ENCODE measurements at regions of chr5 and their contacts with region 1.

Region 1: DNA sequence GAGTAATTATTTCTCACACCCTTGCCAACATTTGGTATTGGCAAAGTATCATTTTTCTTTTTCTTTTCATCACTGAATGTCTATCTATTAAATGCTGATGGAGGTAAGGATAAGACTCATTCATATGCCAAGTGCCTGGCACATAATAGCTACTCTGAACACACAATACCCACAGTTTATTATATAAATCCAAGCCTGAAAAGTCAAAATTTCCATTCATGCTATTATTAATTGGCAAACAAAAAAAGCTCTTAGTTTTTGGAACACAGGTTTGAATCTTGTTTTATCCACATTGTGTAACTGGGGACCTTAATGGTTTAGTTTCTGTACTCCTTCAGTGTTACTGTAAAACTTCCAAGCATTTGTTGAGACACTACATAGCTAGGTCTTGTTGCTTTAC is 6.4 kb upstream of the ATOX1 start:
- DNase-seq: no peak
- ATAC-seq: no peak
- H3K4me3 ChIP-seq: no peak overlapping the region
- H3K27ac ChIP-seq: no peak overlapping the region
- H3K4me1 ChIP-seq: peaks cover 5% of the 10 kb centered on the region
- H3K27me3 ChIP-seq: no peaks in the 10 kb centered on the region
- CTCF ChIP-seq: no peak
- EP300 ChIP-seq: no peak
- POLR2A ChIP-seq: no peak
- RAD21 ChIP-seq: no peak

Region 2: GRCh38 chr5:151751091-151751490 is 13.7 kb before region 1 on chr5:
- CTCF ChIA-PET with region 1: interaction called, 4 read pairs
- POLR2A ChIA-PET with region 1: interaction called, 241 read pairs
- RAD21 ChIA-PET with region 1: interaction called, 90 read pairs
- SMC1A ChIA-PET with region 1: interaction called, 84 read pairs
- in situ Hi-C with region 1: no loop called
- intact Hi-C with region 1: no loop called
- DNase-seq: no peak
- ATAC-seq: no peak
- H3K4me3 ChIP-seq: no peak overlapping the region
- H3K27ac ChIP-seq: no peak overlapping the region
- H3K4me1 ChIP-seq: peaks cover 29% of the 10 kb centered on the region
- H3K27me3 ChIP-seq: no peaks in the 10 kb centered on the region
- CTCF ChIP-seq: no peak
- EP300 ChIP-seq: no peak
- POLR2A ChIP-seq: no peak
- RAD21 ChIP-seq: no peak